CD4-positive, alpha-beta memory T cell (primary cell): ENCODE measurements at regions of chr7 and their contacts with region 1.

Region 1: DNA sequence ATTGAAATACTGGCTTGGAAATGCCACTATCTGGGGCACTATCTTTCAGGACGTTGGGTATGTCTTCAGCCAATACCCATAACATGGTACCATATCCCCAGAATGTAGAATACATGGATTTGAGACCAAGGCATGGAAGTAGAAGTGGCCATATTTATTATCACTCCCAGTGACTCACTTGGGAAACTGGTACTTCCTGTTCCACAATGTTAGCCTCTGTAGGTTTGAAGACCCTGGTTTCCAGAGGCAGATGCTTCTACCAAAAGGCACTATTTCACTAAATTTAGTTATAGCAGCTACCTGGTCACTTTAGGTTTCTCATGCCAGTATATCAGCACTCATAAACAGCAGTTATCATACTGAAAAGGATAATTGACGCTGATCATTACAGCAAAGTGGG is 184.2 kb downstream of the CCDC71L start:
- DNase-seq: no peak
- H3K4me3 ChIP-seq: no peak overlapping the region
- H3K4me3 Mint-ChIP-seq: no peak overlapping the region
- H3K27ac ChIP-seq: no peak overlapping the region
- H3K27ac Mint-ChIP-seq: no peak overlapping the region
- H3K4me1 ChIP-seq: no peaks in the 10 kb centered on the region
- H3K4me1 Mint-ChIP-seq: no peaks in the 10 kb centered on the region
- H3K27me3 ChIP-seq: no peaks in the 10 kb centered on the region
- H3K27me3 Mint-ChIP-seq: peaks cover 5 to 6% of the 10 kb centered on the region in 2 donors

Region 2: DNA sequence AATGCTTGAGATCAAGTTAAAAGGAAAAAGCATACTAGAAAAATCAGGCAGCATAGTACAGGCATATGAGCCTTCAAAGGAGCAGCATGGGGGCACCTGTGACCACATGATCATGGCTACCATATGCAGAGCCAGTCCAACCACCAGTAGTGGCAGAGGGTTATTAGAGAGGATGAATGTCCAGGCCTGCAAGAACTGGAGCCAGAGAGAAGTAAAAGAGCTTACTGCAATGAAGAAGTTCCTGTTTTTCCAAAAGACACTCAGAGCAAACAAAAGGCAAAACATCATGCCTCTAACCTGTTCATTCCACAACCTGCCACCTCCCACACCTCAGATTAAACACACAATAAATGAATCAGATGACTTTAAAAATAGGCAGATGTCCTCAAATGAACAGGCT is 92.4 kb before region 1 on chr7:
- CTCF ChIA-PET with region 1: no interaction called
- POLR2A ChIA-PET with region 1: no interaction called
- intact Hi-C with region 1: no loop called
- DNase-seq: no peak
- H3K4me3 ChIP-seq: no peak overlapping the region
- H3K4me3 Mint-ChIP-seq: no peak overlapping the region
- H3K27ac ChIP-seq: no peak overlapping the region
- H3K27ac Mint-ChIP-seq: no peak overlapping the region
- H3K4me1 ChIP-seq: no peaks in the 10 kb centered on the region
- H3K4me1 Mint-ChIP-seq: no peaks in the 10 kb centered on the region
- H3K27me3 ChIP-seq: no peaks in the 10 kb centered on the region
- H3K27me3 Mint-ChIP-seq: no peaks in the 10 kb centered on the region

Region 3: GRCh38 chr7:106520962-106521940 is 44.5 kb after region 1 on chr7:
- CTCF ChIA-PET with region 1: no interaction called
- POLR2A ChIA-PET with region 1: no interaction called
- intact Hi-C with region 1: no loop called
- DNase-seq: no peak
- H3K4me3 ChIP-seq: no peak overlapping the region
- H3K4me3 Mint-ChIP-seq: no peak overlapping the region
- H3K27ac ChIP-seq: no peak overlapping the region
- H3K27ac Mint-ChIP-seq: no peak overlapping the region
- H3K4me1 ChIP-seq: peaks cover 17% of the 10 kb centered on the region
- H3K4me1 Mint-ChIP-seq: peaks cover 14 to 21% (median 19%) of the 10 kb centered on the region in 4 donors
- H3K27me3 ChIP-seq: no peaks in the 10 kb centered on the region
- H3K27me3 Mint-ChIP-seq: peaks cover 13 to 17% of the 10 kb centered on the region in 2 donors

Region 4: DNA sequence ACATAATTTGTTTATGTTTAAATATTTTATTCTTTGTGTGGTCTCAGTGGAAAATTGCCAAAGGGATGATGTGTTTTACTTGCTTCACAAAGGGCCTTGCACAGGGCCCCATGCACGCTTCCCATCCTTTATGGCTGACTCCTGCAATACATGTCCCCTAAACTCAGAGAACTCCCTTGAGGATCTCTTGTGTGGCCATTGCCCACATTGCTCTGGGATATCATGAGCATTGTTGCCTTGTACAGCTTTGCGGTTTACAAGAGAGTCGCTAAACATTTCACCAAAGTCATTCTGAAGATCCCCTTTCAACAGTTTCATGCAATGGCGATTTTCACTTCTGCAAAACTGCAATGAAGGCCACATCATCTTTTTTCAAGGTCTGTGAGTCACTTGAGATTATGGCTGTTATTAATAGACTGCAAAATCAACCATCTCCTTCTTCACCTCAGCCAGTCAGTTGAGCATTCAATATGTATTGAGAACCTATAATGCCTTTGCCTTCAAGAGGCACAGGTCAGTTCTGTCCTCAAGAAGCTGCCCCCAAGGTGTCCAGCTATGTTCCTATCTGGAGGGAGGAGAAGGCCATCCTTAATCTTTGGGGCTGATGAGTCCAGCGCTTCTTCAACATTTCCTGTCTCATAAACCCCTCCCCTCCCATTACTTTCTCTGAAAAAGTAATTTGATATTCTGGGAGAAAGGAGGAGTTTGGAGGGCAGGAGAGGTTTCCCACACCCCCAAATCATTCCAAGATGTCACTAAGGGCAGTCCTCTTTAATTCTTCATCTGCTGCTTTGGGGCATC is 76.1 kb after region 1 on chr7:
- CTCF ChIA-PET with region 1: no interaction called
- POLR2A ChIA-PET with region 1: no interaction called
- intact Hi-C with region 1: loop called (anchors 10 kb)
- DNase-seq: no peak
- H3K4me3 ChIP-seq: no peak overlapping the region
- H3K4me3 Mint-ChIP-seq: no peak overlapping the region
- H3K27ac ChIP-seq: no peak overlapping the region
- H3K27ac Mint-ChIP-seq: no peak overlapping the region
- H3K4me1 ChIP-seq: no peaks in the 10 kb centered on the region
- H3K4me1 Mint-ChIP-seq: no peaks in the 10 kb centered on the region
- H3K27me3 ChIP-seq: no peaks in the 10 kb centered on the region
- H3K27me3 Mint-ChIP-seq: peaks cover 0 to 5% of the 10 kb centered on the region in 2 donors